Right ventricle myocardium superior (tissue), 1 donor: ENCODE measurements at regions of chr11 and their contacts with region 1.

Region 1: GRCh38 chr11:14907411-14908213 is 15.6 kb upstream of the CYP2R1 start:
- DNase-seq: peak; percentile 90
- ATAC-seq: peak; percentile 80

Region 2: DNA sequence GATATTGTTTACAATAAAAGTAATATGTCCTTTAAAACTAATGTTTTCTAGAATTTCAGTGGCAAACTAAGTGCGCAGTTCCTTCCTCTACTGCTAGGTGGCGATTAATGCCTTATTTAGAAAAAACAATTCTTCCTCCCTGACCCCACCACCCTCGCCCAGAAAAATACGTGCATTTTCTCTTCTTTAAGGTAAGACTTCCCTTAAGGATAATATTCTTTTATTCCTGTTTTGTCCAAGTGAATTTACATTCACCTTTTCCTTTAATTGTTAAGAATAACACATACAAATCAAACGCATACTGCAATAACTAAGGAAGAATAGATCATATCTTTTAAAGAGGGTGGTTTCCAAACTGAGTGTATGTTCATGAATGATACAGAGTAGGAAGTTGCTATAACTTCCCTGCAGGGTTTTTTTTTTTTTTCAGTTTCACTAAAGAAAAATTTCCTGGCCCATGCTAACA is 370.4 kb before region 1 on chr11:
- intact Hi-C with region 1: loop called (anchors 10 kb)
- DNase-seq: no peak
- ATAC-seq: no peak

Region 3: DNA sequence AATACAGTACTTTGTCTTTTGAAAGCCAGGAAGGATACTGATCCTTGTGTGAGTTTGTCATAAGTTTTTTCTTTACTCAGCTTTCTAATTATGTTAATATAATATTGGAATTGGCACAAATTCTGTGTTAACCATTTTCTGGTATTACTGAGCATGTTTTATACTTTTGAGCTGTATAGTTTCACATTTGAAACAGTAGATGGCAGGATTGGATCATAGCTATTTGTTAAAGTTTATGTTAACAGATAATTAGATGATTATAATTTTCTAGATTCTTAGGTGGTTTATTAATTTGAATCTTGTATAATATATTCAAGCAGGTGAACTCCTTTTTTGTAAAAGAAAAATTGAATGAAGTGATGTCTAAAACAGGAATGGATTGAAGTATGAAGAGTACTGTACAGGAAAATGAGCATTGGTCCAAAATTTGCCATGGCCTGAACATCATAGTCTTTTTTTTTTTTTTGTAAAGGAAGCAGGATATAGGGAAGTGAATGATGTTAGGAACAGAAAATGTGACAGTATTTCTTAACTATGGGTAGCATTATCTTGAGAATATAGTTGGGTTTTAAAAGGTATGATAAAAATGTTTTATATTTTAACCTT is 117.6 kb before region 1 on chr11:
- intact Hi-C with region 1: loop called (anchors 5 kb)
- DNase-seq: no peak
- ATAC-seq: no peak

Region 4: GRCh38 chr11:15074206-15075161 is 166.9 kb after region 1 on chr11:
- intact Hi-C with region 1: loop called (anchors 10 kb)
- DNase-seq: peak; percentile 93
- ATAC-seq: peak; percentile 95